Naive thymus-derived CD4-positive, alpha-beta T cell (primary cell): ENCODE measurements at regions of chr17 and their contacts with region 1.

Region 1: GRCh38 chr17:8894673-8895578 is 27.5 kb upstream of the PIK3R6 start:
- DNase-seq: peak in 6 of 9 donors; percentile 31 to 55 (median 47)
- ATAC-seq: peak; percentile 33
- H3K4me3 ChIP-seq: no peak overlapping the region
- H3K4me3 Mint-ChIP-seq: peak overlapping the region in 6 of 10 donors; percentile 1 to 69 (median 42)
- H3K27ac ChIP-seq: peak overlapping the region; percentile 12
- H3K27ac Mint-ChIP-seq: peak overlapping the region; percentile 16 to 96 (median 70)
- H3K4me1 ChIP-seq: peaks cover 50% of the 10 kb centered on the region in 2 donors
- H3K4me1 Mint-ChIP-seq: peaks cover 44 to 71% (median 62%) of the 10 kb centered on the region in 7 donors
- H3K27me3 ChIP-seq: no peaks in the 10 kb centered on the region
- H3K27me3 Mint-ChIP-seq: no peaks in the 10 kb centered on the region

Region 2: GRCh38 chr17:7035591-7036368 is 1859.1 kb before region 1 on chr17 and contains the start of gene SLC16A13:
- CTCF ChIA-PET with region 1: no interaction called
- POLR2A ChIA-PET with region 1: no interaction called
- intact Hi-C with region 1: no loop called
- DNase-seq: peak; percentile 87 to 99 (median 97)
- ATAC-seq: peak; percentile 95
- H3K4me3 ChIP-seq: peak within 1 kb of the TSS; percentile 67
- H3K4me3 Mint-ChIP-seq: peak within 1 kb of the TSS; percentile 89 to 95 (median 93)
- H3K27ac ChIP-seq: peak within 1 kb of the TSS; percentile 94
- H3K27ac Mint-ChIP-seq: peak within 1 kb of the TSS; percentile 96 to 99 (median 98)
- H3K4me1 ChIP-seq: peaks cover 26 to 36% of the 10 kb centered on the region in 2 donors
- H3K4me1 Mint-ChIP-seq: peaks cover 39 to 80% (median 58%) of the 10 kb centered on the region in 7 donors
- H3K27me3 ChIP-seq: no peaks in the 10 kb centered on the region
- H3K27me3 Mint-ChIP-seq: no peaks in the 10 kb centered on the region
- total RNA-seq, gene SLC16A13: 3.4 to 20.9 (median 15.0) TPM

Region 3: GRCh38 chr17:8435245-8436168 is 459.4 kb before region 1 on chr17 and contains the start of gene NDEL1:
- CTCF ChIA-PET with region 1: no interaction called
- POLR2A ChIA-PET with region 1: interaction called, 6 read pairs
- intact Hi-C with region 1: loop called (anchors 1 to 5 kb)
- DNase-seq: peak; percentile 97 to 99 (median 99)
- ATAC-seq: peak; percentile 95
- H3K4me3 ChIP-seq: peak within 1 kb of the TSS; percentile 81
- H3K4me3 Mint-ChIP-seq: peak within 1 kb of the TSS; percentile 94 to 99 (median 96)
- H3K27ac ChIP-seq: peak within 1 kb of the TSS; percentile 100
- H3K27ac Mint-ChIP-seq: peak within 1 kb of the TSS; percentile 96 to 100 (median 98)
- H3K4me1 ChIP-seq: peaks cover 10 to 22% of the 10 kb centered on the region in 2 donors
- H3K4me1 Mint-ChIP-seq: peaks cover 9 to 46% (median 37%) of the 10 kb centered on the region in 7 donors
- H3K27me3 ChIP-seq: no peaks in the 10 kb centered on the region
- H3K27me3 Mint-ChIP-seq: no peaks in the 10 kb centered on the region
- total RNA-seq, gene NDEL1: 72.6 to 274 (median 116) TPM

Region 4: GRCh38 chr17:8630802-8631553 is 263.9 kb before region 1 on chr17:
- CTCF ChIA-PET with region 1: no interaction called
- POLR2A ChIA-PET with region 1: no interaction called
- intact Hi-C with region 1: loop called in 1 of 2 experiments (anchors 5 kb)
- DNase-seq: peak; percentile 63 to 91 (median 82)
- ATAC-seq: peak; percentile 97
- H3K4me3 ChIP-seq: peak overlapping the region; percentile 64
- H3K4me3 Mint-ChIP-seq: peak overlapping the region; percentile 91 to 100 (median 99)
- H3K27ac ChIP-seq: peak overlapping the region; percentile 66
- H3K27ac Mint-ChIP-seq: peak overlapping the region in 7 of 9 donors; percentile 35 to 95 (median 80)
- H3K4me1 ChIP-seq: peaks cover 5% of the 10 kb centered on the region in 2 donors
- H3K4me1 Mint-ChIP-seq: peaks cover 0 to 18% (median 13%) of the 10 kb centered on the region in 7 donors
- H3K27me3 ChIP-seq: peaks cover 3 to 4% of the 10 kb centered on the region in 2 donors
- H3K27me3 Mint-ChIP-seq: peaks cover 30 to 67% (median 51%) of the 10 kb centered on the region in 5 donors

Region 5: DNA sequence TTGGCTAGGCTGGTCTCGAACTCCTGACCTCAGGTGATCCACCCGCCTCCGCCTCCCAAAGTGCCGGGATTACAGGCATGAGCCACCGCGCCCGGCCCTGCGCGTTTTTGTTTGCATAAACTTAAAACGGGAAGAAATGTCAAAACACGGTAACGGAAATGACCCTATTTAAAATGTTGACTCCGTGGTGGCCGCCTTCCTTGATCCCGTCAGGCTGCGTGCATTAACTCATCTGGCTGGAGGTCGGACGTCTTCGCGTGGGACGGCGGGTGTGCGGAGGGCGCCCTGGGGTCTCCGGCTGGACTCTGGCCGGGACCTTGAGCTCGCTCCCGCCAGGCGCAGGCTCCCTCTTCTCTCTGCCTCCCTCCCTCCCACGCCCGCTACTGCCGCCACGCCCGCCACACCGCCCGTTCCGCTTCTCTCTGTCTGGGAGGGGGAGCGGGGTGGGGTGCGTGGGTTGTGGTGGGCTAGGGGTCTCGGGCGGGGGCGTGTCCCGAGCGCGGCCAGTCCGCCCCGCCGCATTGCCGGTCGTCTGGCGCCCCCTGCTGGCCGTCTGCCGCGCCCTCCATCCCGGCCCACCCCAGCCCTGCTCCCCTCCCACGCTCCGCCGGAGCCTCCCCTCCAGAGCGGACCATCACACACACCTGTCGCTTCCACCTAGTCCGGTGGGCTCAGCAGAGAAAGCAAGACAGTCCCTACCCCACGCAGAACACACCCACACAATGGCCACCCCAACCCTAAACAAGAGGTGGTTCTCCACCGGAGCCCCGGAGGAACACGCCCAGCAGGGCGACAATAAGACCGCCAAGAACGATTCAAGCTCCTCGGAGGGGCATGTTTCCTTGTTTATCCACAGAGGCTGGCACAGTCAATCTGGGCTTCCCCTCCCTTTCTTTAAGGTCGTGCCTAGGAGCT is 149.1 kb before region 1 on chr17:
- CTCF ChIA-PET with region 1: interaction called, 3 read pairs
- POLR2A ChIA-PET with region 1: no interaction called
- intact Hi-C with region 1: loop called (anchors 2 to 5 kb)
- DNase-seq: peak; percentile 47 to 84 (median 70)
- ATAC-seq: peak; percentile 88
- H3K4me3 ChIP-seq: peak overlapping the region; percentile 80
- H3K4me3 Mint-ChIP-seq: peak overlapping the region; percentile 85 to 94 (median 91)
- H3K27ac ChIP-seq: peak overlapping the region; percentile 67
- H3K27ac Mint-ChIP-seq: peak overlapping the region; percentile 84 to 95 (median 88)
- H3K4me1 ChIP-seq: peaks cover 3 to 21% of the 10 kb centered on the region in 2 donors
- H3K4me1 Mint-ChIP-seq: peaks cover 2 to 34% (median 25%) of the 10 kb centered on the region in 7 donors
- H3K27me3 ChIP-seq: no peaks in the 10 kb centered on the region
- H3K27me3 Mint-ChIP-seq: peaks cover 0 to 21% (median 0%) of the 10 kb centered on the region in 5 donors

Region 6: DNA sequence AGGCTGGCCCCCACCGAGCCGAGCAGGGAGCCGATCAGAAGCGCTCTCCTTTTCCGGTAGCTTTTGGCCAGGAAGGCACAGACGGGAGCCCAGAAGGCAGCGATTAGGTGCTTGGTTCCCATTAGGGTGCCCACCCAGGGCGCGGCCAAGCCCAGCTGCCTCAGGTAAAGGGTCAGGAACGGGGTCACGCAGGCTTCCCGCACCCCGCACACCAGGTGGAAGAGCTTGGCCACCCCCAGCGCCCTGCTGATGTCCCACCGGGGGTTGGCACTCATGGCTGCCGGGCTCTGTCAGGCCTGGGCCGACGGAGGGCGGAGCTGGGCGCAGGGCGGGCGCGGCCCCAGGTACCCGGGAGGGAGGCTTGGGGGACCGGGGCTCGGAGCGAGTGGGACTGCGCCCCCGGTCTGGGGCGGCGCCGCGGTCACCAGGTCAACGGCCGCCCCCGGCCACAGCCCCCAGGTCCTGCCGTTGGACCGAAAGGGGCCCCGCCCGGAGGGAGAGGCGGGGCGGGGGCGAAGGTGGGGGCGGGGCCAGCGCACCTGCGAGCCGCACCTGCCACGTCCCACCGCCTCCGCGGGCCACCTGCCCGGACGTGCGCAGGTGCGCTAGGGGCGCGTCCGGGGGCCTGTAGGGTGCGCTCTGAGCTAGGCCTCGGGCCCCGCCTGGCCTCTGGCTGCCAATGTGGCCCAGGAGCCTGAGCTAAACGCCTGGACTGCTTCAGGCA is 95.9 kb before region 1 on chr17 and contains the start of gene MFSD6L:
- CTCF ChIA-PET with region 1: no interaction called
- POLR2A ChIA-PET with region 1: no interaction called
- intact Hi-C with region 1: loop called in 1 of 2 experiments (anchors 10 kb)
- DNase-seq: no peak
- ATAC-seq: no peak
- H3K4me3 ChIP-seq: no peak within 1 kb of the TSS
- H3K4me3 Mint-ChIP-seq: no peak within 1 kb of the TSS
- H3K27ac ChIP-seq: no peak within 1 kb of the TSS
- H3K27ac Mint-ChIP-seq: peak within 1 kb of the TSS in 1 of 9 donors; percentile 25
- H3K4me1 ChIP-seq: no peaks in the 10 kb centered on the region
- H3K4me1 Mint-ChIP-seq: peaks cover 0 to 4% (median 0%) of the 10 kb centered on the region in 7 donors
- H3K27me3 ChIP-seq: no peaks in the 10 kb centered on the region
- H3K27me3 Mint-ChIP-seq: peaks cover 0 to 4% (median 0%) of the 10 kb centered on the region in 5 donors
- total RNA-seq, gene MFSD6L: 0.96 to 1.8 TPM in 2 of 5 experiments, not detected in the others

Region 7: GRCh38 chr17:8857919-8858318 is 37.0 kb before region 1 on chr17:
- CTCF ChIA-PET with region 1: interaction called, 3 read pairs
- POLR2A ChIA-PET with region 1: no interaction called
- intact Hi-C with region 1: loop called in 1 of 2 experiments (anchors 5 kb)
- DNase-seq: peak in 5 of 9 donors; percentile 15 to 58 (median 25)
- ATAC-seq: no peak
- H3K4me3 ChIP-seq: no peak overlapping the region
- H3K4me3 Mint-ChIP-seq: peak overlapping the region in 9 of 10 donors; percentile 55 to 87 (median 71)
- H3K27ac ChIP-seq: no peak overlapping the region
- H3K27ac Mint-ChIP-seq: peak overlapping the region in 4 of 9 donors; percentile 63 to 87 (median 81)
- H3K4me1 ChIP-seq: peaks cover 0 to 14% of the 10 kb centered on the region in 2 donors
- H3K4me1 Mint-ChIP-seq: peaks cover 26 to 49% (median 35%) of the 10 kb centered on the region in 7 donors
- H3K27me3 ChIP-seq: no peaks in the 10 kb centered on the region
- H3K27me3 Mint-ChIP-seq: no peaks in the 10 kb centered on the region

Region 8: GRCh38 chr17:8954339-8954738 is 59.4 kb after region 1 on chr17:
- CTCF ChIA-PET with region 1: interaction called, 5 read pairs
- POLR2A ChIA-PET with region 1: interaction called, 10 read pairs
- intact Hi-C with region 1: loop called (anchors 1 kb)
- DNase-seq: peak; percentile 52 to 93 (median 83)
- ATAC-seq: peak; percentile 95
- H3K4me3 ChIP-seq: peak overlapping the region; percentile 33
- H3K4me3 Mint-ChIP-seq: peak overlapping the region; percentile 76 to 94 (median 86)
- H3K27ac ChIP-seq: peak overlapping the region; percentile 70
- H3K27ac Mint-ChIP-seq: peak overlapping the region; percentile 84 to 98 (median 96)
- H3K4me1 ChIP-seq: peaks cover 81 to 99% of the 10 kb centered on the region in 2 donors
- H3K4me1 Mint-ChIP-seq: peaks cover 78 to 100% (median 98%) of the 10 kb centered on the region in 7 donors
- H3K27me3 ChIP-seq: no peaks in the 10 kb centered on the region
- H3K27me3 Mint-ChIP-seq: no peaks in the 10 kb centered on the region